ENCODE measurements at regions of chr3 and their contacts with region 1.

Region 1: GRCh38 chr3:194070634-194071409 is 65.1 kb upstream of the HES1 start:
- DNase-seq: peak; percentile 91
- H3K4me3 Mint-ChIP-seq: peak overlapping the region; percentile 72
- H3K27ac Mint-ChIP-seq: peak overlapping the region; percentile 65
- H3K4me1 Mint-ChIP-seq: peaks cover 40% of the 10 kb centered on the region
- H3K27me3 Mint-ChIP-seq: no peaks in the 10 kb centered on the region
- CTCF ChIP-seq: no peak

Region 2: DNA sequence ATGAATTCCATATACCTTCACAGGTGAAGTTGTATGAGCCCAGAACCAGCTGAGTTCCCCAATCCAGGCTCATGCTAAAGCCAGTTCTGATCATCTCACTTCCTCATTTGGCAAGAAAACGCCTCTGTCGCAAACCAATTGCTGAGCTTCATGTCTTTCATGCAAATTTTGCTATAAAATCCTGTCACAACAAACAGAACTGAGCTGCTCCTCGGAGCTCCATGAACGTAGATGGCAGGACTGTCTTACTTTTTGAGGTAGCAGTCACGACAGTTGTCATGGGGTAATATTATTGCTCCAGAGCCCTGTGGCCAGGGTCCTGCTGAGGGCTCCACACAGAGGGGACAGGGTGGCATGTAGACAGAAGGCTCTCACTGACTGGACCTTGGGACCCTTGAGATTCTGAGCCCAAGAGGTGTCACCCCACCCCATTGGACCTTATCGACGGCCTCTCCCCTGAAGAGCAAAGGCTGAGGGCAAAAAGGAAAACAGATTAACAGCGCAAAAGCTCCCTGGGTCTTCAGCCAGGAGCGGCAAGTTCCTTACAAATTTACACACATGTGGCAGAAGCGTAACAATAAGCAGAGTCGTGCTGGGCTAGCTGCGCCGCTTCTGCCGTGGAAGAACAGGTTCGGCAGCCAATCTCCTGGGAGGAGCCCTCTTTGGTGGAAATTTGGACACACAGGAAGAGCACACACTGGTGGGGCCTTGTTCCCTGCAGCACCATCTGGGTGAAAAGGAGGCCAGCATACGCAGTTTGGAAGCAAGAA is 228.6 kb before region 1 on chr3:
- CTCF ChIA-PET with region 1: no interaction called
- intact Hi-C with region 1: loop called (anchors 5 kb)
- DNase-seq: no peak
- H3K4me3 Mint-ChIP-seq: peak overlapping the region; percentile 59
- H3K27ac Mint-ChIP-seq: peak overlapping the region; percentile 96
- H3K4me1 Mint-ChIP-seq: peaks cover 94% of the 10 kb centered on the region
- H3K27me3 Mint-ChIP-seq: no peaks in the 10 kb centered on the region
- CTCF ChIP-seq: no peak

Region 3: GRCh38 chr3:193883551-193883950 is 187.3 kb before region 1 on chr3:
- CTCF ChIA-PET with region 1: no interaction called
- intact Hi-C with region 1: no loop called
- DNase-seq: no peak
- H3K4me3 Mint-ChIP-seq: no peak overlapping the region
- H3K27ac Mint-ChIP-seq: peak overlapping the region; percentile 51
- H3K4me1 Mint-ChIP-seq: peaks cover 75% of the 10 kb centered on the region
- H3K27me3 Mint-ChIP-seq: no peaks in the 10 kb centered on the region
- CTCF ChIP-seq: no peak